ENCODE measurements at regions of chr2 and their contacts with region 1.

Region 1: DNA sequence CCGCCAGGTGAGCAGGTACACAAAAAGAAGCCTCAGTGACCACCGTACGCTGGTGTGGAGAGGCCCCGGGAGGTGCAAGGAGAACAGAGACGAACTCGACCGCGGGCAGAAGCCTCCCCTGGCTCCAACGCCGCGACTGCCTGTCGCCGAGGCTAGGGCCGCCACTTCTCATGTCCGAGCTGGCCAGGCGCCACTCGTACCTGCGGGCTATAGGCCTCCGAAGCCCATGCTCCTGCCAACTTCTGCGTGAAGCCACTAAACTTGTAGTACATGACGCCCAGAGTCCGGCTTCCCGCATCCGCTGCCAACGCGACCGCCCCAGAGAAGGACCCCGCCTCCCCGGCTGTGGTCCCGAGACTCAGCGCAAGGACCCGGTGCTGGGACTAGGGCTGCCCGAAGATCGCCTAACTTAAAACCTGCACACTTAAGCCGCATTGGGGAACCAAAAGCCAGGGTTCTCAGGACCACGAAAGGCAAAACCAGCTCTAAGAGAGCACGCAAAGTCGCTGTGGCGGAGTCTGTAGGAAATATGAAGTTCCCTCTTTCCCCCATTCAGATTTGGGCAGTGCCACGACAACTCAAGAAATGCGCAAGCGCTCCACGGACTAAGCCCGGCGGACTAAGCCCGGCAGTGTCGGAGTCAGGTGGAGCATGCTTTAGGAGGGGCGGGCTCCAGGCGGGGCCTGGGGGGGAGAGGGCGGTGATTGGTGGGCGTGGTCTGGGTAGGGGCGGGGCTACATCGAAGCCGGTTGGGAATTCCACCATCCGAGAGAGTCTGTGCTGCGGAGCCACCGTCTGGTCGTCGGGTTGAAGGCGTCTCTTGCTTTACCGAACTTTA is at the start of gene COX7A2L:
- DNase-seq: peak; percentile 92 to 98 (median 96)
- ATAC-seq: peak; percentile 94
- H3K4me3 ChIP-seq: peak within 1 kb of the TSS; percentile 89 to 96
- H3K4me3 Mint-ChIP-seq: peak within 1 kb of the TSS; percentile 86
- H3K27ac ChIP-seq: peak within 1 kb of the TSS; percentile 85 to 96
- H3K27ac Mint-ChIP-seq: peak within 1 kb of the TSS; percentile 99
- H3K4me1 ChIP-seq: peaks cover 33% of the 10 kb centered on the region
- H3K4me1 Mint-ChIP-seq: peaks cover 54% of the 10 kb centered on the region
- H3K27me3 ChIP-seq: no peaks in the 10 kb centered on the region
- H3K27me3 Mint-ChIP-seq: no peaks in the 10 kb centered on the region
- CTCF ChIP-seq: no peak
- total RNA-seq, gene COX7A2L: 56.9 to 60.8 TPM

Region 2: GRCh38 chr2:41840702-41841551 is 520.2 kb before region 1 on chr2:
- CTCF ChIA-PET with region 1: no interaction called
- POLR2A ChIA-PET with region 1: no interaction called
- intact Hi-C with region 1: loop called (anchors 1 to 2 kb)
- DNase-seq: peak; percentile 94 to 98 (median 97)
- ATAC-seq: peak; percentile 97
- H3K4me3 ChIP-seq: peak overlapping the region; percentile 74 to 81
- H3K4me3 Mint-ChIP-seq: peak overlapping the region; percentile 95
- H3K27ac ChIP-seq: peak overlapping the region; percentile 77 to 82
- H3K27ac Mint-ChIP-seq: peak overlapping the region; percentile 96
- H3K4me1 ChIP-seq: peaks cover 11% of the 10 kb centered on the region
- H3K4me1 Mint-ChIP-seq: peaks cover 14% of the 10 kb centered on the region
- H3K27me3 ChIP-seq: peaks cover 0 to 1% of the 10 kb centered on the region in 2 experiments
- H3K27me3 Mint-ChIP-seq: peaks cover 17% of the 10 kb centered on the region
- CTCF ChIP-seq: peak; percentile 95

Region 3: GRCh38 chr2:42132966-42133641 is 228.0 kb before region 1 on chr2:
- CTCF ChIA-PET with region 1: no interaction called
- POLR2A ChIA-PET with region 1: no interaction called
- intact Hi-C with region 1: loop called in 1 of 2 experiments (anchors 1 kb)
- DNase-seq: peak; percentile 83 to 97 (median 90)
- ATAC-seq: peak; percentile 88
- H3K4me3 ChIP-seq: peak overlapping the region; percentile 6 to 22
- H3K4me3 Mint-ChIP-seq: peak overlapping the region; percentile 76
- H3K27ac ChIP-seq: peak overlapping the region; percentile 61 to 90
- H3K27ac Mint-ChIP-seq: peak overlapping the region; percentile 98
- H3K4me1 ChIP-seq: peaks cover 80% of the 10 kb centered on the region
- H3K4me1 Mint-ChIP-seq: peaks cover 85% of the 10 kb centered on the region
- H3K27me3 ChIP-seq: no peaks in the 10 kb centered on the region
- H3K27me3 Mint-ChIP-seq: no peaks in the 10 kb centered on the region
- CTCF ChIP-seq: no peak

Region 4: DNA sequence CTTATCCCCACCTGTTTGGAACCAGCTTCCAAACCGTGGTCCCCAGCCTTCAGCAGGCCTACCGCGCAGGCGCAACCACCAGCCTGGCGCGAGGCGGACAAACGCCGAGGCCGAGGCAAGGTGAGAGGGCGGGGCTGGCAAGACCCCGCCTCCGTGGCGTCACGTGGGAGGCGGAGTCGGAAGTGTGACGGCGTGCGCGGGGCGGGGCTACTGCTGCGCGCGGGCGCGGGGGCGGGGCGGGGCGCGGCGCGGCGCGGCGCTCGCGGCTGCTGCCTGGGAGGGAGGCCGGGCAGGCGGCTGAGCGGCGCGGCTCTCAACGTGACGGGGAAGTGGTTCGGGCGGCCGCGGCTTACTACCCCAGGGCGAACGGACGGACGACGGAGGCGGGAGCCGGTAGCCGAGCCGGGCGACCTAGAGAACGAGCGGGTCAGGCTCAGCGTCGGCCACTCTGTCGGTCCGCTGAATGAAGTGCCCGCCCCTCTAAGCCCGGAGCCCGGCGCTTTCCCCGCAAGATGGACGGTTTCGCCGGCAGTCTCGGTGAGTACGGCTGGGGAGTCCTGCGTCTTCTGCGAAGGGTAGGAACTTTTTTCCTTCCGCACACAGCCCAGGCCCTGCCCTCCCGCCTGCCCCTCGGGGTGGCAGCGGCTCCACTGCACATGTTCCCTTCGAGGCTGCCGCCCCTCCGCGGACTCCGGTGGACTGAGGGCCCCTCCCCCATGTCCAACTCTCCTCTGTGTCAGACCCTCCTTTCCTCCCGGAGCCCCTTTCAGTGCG is 191.8 kb before region 1 on chr2 and contains the start of gene EML4:
- CTCF ChIA-PET with region 1: no interaction called
- POLR2A ChIA-PET with region 1: no interaction called
- intact Hi-C with region 1: loop called in 1 of 2 experiments (anchors 1 kb)
- DNase-seq: peak; percentile 81 to 97 (median 90)
- ATAC-seq: peak; percentile 88
- H3K4me3 ChIP-seq: peak within 1 kb of the TSS; percentile 72 to 86
- H3K4me3 Mint-ChIP-seq: no peak within 1 kb of the TSS
- H3K27ac ChIP-seq: peak within 1 kb of the TSS; percentile 77 to 92
- H3K27ac Mint-ChIP-seq: no peak within 1 kb of the TSS
- H3K4me1 ChIP-seq: peaks cover 45% of the 10 kb centered on the region
- H3K4me1 Mint-ChIP-seq: peaks cover 26% of the 10 kb centered on the region
- H3K27me3 ChIP-seq: no peaks in the 10 kb centered on the region
- H3K27me3 Mint-ChIP-seq: no peaks in the 10 kb centered on the region
- CTCF ChIP-seq: no peak
- total RNA-seq, gene EML4: 224 to 240 TPM

Region 5: DNA sequence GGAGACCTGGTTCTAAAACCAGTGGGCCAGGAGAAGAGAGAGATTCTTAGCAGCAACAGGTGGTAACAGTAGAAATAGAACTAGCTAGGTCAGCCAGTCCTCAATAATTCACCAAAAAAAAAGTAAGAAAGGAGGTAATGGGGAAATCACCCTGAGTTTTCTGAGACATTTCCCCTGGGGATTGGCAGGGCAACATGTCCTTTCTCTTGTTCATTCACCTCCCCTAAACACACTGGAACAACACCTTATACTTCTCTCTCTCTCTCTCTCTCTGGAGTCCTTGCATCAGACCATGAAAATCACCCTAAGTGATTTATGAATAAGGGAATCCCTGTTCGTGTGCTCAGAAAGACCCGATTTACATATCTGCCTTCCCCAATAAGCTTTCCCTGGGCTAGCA is 64.9 kb before region 1 on chr2:
- CTCF ChIA-PET with region 1: no interaction called
- POLR2A ChIA-PET with region 1: no interaction called
- intact Hi-C with region 1: loop called in 1 of 2 experiments (anchors 5 kb)
- DNase-seq: peak in 2 of 9 experiments; percentile 25 to 40
- ATAC-seq: no peak
- H3K4me3 ChIP-seq: no peak overlapping the region
- H3K4me3 Mint-ChIP-seq: peak overlapping the region; percentile 3
- H3K27ac ChIP-seq: peak overlapping the region in 1 of 2 experiments; percentile 65
- H3K27ac Mint-ChIP-seq: peak overlapping the region; percentile 33
- H3K4me1 ChIP-seq: peaks cover 41% of the 10 kb centered on the region
- H3K4me1 Mint-ChIP-seq: peaks cover 55% of the 10 kb centered on the region
- H3K27me3 ChIP-seq: no peaks in the 10 kb centered on the region
- H3K27me3 Mint-ChIP-seq: no peaks in the 10 kb centered on the region
- CTCF ChIP-seq: no peak

Region 6: GRCh38 chr2:42494355-42495233 is 133.5 kb after region 1 on chr2:
- CTCF ChIA-PET with region 1: no interaction called
- POLR2A ChIA-PET with region 1: no interaction called
- intact Hi-C with region 1: loop called (anchors 1 to 5 kb)
- DNase-seq: peak; percentile 51 to 84 (median 75)
- ATAC-seq: peak; percentile 43
- H3K4me3 ChIP-seq: peak overlapping the region; percentile 58 to 74
- H3K4me3 Mint-ChIP-seq: peak overlapping the region; percentile 93
- H3K27ac ChIP-seq: peak overlapping the region in 1 of 2 experiments; percentile 15
- H3K27ac Mint-ChIP-seq: peak overlapping the region; percentile 89
- H3K4me1 ChIP-seq: no peaks in the 10 kb centered on the region
- H3K4me1 Mint-ChIP-seq: peaks cover 32% of the 10 kb centered on the region
- H3K27me3 ChIP-seq: peaks cover 0 to 4% of the 10 kb centered on the region in 2 experiments
- H3K27me3 Mint-ChIP-seq: peaks cover 9% of the 10 kb centered on the region
- CTCF ChIP-seq: peak; percentile 92

Region 7: DNA sequence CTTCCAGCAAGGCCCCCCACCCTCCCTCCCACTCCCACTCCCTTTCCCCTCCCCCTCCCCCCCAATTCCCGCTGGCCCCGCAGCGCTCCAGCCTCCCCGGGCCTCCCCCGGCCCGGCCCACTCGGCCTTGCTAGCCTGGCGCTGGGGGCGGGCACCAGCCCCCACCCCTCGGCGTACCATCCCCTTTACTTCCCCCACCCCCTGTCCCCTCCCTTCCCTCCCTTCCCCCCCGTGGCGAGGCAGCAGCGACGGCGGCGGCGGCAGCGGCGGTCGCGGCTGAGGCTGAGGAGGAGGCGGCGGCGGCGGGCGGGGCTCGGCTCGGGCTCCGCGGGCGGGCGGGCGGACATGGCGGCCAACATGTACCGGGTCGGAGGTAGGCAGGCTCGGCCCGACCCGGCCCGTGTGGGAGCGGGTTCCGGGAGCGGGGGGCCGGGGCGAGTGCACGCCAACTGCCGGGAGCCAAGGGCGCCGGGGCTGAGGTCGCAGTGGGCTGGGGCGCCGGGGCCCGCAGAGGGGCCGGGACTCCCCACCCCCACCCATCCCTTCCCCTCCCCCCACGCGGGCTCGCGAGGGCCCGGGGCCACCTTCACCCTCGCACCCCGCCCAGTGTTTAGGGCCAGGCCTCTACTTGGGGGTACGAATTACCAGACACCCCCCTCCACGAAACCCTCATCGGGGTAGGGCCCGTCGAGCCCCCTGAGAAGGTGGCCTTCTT is 207.4 kb after region 1 on chr2 and contains the start of gene MTA3:
- CTCF ChIA-PET with region 1: no interaction called
- POLR2A ChIA-PET with region 1: no interaction called
- intact Hi-C with region 1: loop called in 1 of 2 experiments (anchors 2 kb)
- DNase-seq: peak; percentile 37 to 82 (median 66)
- ATAC-seq: peak; percentile 69
- H3K4me3 ChIP-seq: peak within 1 kb of the TSS; percentile 63 to 65
- H3K4me3 Mint-ChIP-seq: peak within 1 kb of the TSS; percentile 90
- H3K27ac ChIP-seq: peak within 1 kb of the TSS in 1 of 2 experiments; percentile 3
- H3K27ac Mint-ChIP-seq: peak within 1 kb of the TSS; percentile 92
- H3K4me1 ChIP-seq: peaks cover 37% of the 10 kb centered on the region
- H3K4me1 Mint-ChIP-seq: peaks cover 46% of the 10 kb centered on the region
- H3K27me3 ChIP-seq: no peaks in the 10 kb centered on the region
- H3K27me3 Mint-ChIP-seq: no peaks in the 10 kb centered on the region
- CTCF ChIP-seq: no peak
- total RNA-seq, gene MTA3: 17.6 to 18.4 TPM

Measured in CD8-positive, alpha-beta T cell (primary cell).